ENCODE measurements at regions of chr7 and their contacts with region 1.

Region 1: DNA sequence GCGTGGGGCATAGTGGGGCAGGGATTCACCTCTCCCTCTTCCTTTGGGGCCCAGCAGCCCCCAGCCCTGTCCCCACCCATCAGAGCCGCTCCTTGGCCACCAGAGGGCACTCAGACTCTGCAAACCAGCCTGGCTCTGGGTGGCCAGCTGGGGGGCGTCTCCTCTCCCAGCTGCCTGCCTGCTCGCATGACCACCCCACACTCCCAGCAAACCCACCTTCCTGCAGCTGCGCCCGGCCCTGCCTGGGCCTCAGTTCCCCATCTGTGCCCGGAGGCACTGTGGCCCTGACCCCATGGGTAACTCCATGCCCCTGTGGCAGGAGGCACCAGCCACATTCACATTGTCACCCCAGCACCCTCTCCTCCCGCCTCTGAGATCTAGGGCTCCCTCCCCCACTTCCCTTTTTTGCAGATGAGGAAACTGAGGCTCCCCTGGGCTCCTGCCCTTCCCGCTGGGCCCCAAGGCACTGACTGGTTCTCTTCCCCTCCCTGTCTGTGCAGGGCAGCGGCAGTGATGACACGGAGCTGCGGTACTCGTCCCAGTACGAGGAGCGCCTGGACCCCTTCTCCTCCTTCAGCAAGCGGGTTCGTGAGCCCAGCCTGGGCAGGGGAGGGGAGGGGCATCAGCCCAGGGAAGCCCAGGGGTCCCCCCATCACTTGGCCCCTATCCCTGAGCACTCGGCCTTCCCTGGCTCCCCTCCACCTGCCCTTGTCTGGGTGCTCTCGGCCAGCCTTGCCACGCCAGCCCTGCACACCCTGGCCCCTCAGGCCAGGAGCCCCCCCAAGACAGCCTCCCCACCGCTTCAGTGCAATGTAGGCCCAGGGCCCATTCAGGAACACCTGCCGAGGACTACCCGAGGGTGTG is 6.9 kb upstream of the SH2B2 start:
- DNase-seq: peak; percentile 56
- ATAC-seq: peak; percentile 94
- H3K4me3 ChIP-seq: no peak overlapping the region
- H3K27ac ChIP-seq: no peak overlapping the region
- H3K4me1 ChIP-seq: no peaks in the 10 kb centered on the region
- H3K27me3 ChIP-seq: no peaks in the 10 kb centered on the region
- CTCF ChIP-seq: peak; percentile 90

Region 2: GRCh38 chr7:102390697-102391484 is 111.1 kb after region 1 on chr7:
- CTCF ChIA-PET with region 1: interaction called, 3 read pairs
- POLR2A ChIA-PET with region 1: no interaction called
- intact Hi-C with region 1: loop called (anchors 1 kb)
- DNase-seq: peak; percentile 80
- ATAC-seq: peak; percentile 92
- H3K4me3 ChIP-seq: no peak overlapping the region
- H3K27ac ChIP-seq: no peak overlapping the region
- H3K4me1 ChIP-seq: peaks cover 6% of the 10 kb centered on the region
- H3K27me3 ChIP-seq: no peaks in the 10 kb centered on the region
- CTCF ChIP-seq: peak; percentile 86